Activated naive CD8-positive, alpha-beta T cell treated with anti-CD3 and anti-CD28 coated beads, Interleukin-2, amount 10 ng/mL, durations not matched to agents 7 days and 5 days (primary cell): ENCODE measurements at regions of chr17 and their contacts with region 1.

Region 1: DNA sequence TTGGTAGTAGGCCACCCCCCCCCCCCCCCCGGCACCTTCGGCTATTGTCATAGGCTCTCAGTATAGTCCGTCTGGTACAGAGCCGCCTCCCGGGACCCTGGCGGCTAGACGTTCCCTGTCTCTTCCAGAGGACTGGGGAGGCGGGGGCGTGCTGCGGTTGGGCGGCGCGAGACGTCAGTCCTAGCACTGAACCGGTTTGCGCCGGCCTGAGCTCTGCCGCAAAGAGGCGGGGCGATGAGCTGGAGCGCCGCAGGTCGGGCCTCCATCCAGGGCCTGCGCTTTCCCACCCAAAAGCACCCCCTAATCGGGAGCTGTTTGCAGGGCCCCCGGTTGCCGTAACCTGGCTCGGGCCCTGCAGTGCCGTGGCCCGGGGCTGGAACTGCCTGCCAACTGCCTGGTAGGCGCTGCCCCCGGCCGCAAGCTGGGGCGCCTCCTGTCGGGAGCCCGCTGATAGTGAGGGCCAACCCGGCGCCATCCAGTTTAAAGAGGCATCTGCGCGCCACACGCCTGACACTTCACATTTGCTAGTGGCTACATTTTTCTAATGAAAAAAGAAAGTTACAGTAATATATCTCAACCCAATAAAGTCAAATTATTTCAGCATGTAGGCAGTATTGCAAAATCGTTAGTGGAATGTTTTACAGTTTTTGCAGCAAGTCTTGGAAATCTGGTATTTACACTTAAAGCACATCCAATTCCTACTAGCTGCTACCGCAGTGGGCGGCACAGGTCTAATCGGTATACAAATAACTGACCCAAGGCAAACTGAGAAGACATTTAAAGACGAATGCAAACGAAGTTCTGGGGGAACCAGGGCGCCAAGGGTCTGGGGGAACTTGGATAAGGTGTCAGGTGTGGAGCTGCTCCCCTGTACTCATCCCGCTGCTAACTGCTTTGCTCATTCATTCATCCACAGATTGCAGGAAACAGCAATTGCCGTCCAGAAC is 748 bp upstream of the USP22 start:
- DNase-seq: peak; percentile 96
- ATAC-seq: peak; percentile 86
- H3K4me3 Mint-ChIP-seq: peak overlapping the region; percentile 84
- H3K27ac Mint-ChIP-seq: peak overlapping the region; percentile 90
- H3K4me1 Mint-ChIP-seq: peaks cover 22% of the 10 kb centered on the region
- H3K27me3 Mint-ChIP-seq: peaks cover under 1% of the 10 kb centered on the region

Region 2: GRCh38 chr17:20944014-20944865 is 99.3 kb before region 1 on chr17:
- POLR2A ChIA-PET with region 1: no interaction called
- DNase-seq: peak; percentile 39
- ATAC-seq: peak; percentile 88
- H3K4me3 Mint-ChIP-seq: no peak overlapping the region
- H3K27ac Mint-ChIP-seq: no peak overlapping the region
- H3K4me1 Mint-ChIP-seq: peaks cover 3% of the 10 kb centered on the region
- H3K27me3 Mint-ChIP-seq: peaks cover 7% of the 10 kb centered on the region

Region 3: GRCh38 chr17:21058098-21058893 is 14.7 kb after region 1 on chr17:
- POLR2A ChIA-PET with region 1: interaction called, 13 read pairs
- DNase-seq: no peak
- ATAC-seq: no peak
- H3K4me3 Mint-ChIP-seq: no peak overlapping the region
- H3K27ac Mint-ChIP-seq: no peak overlapping the region
- H3K4me1 Mint-ChIP-seq: no peaks in the 10 kb centered on the region
- H3K27me3 Mint-ChIP-seq: peaks cover 6% of the 10 kb centered on the region

Region 4: DNA sequence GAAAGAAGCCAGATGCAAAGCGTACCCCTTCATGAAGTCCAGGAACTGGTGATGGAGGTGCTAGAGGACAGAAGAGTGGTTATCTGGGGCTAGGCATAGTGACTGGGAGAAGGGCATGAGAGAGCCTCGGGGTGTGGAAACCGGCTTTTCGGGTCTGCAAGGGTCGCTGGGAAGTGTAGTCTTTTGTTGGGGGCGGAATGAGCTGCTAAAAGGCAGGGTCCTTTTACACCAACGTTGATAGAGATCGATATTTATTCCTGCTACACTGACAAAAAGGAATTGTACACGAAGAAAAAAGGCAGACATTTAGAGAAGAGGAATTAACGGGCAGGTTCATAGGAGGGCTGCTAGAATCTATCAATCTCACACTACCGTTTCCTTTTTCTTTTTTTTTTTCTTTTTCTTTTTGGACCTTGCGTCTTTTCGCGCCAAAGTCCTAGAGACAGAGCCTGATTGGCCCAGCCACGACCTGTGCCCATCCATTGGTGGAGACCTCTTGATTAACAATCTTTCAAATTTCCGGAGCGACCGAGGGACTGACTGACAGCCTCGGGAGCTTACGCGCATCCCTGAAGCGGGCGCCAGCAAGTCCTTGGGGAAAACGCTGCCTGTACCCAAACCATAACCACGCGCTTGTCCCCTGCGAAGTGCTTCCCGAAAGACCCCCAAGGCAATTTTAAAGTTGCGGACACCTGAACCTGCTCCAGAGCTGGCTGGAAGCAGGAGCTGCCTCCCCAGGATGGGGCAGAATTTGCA is 55.6 kb after region 1 on chr17:
- POLR2A ChIA-PET with region 1: interaction called, 46 read pairs
- DNase-seq: peak; percentile 75
- ATAC-seq: peak; percentile 99
- H3K4me3 Mint-ChIP-seq: peak overlapping the region; percentile 89
- H3K27ac Mint-ChIP-seq: peak overlapping the region; percentile 94
- H3K4me1 Mint-ChIP-seq: peaks cover 14% of the 10 kb centered on the region
- H3K27me3 Mint-ChIP-seq: no peaks in the 10 kb centered on the region

Region 5: GRCh38 chr17:21275579-21276263 is 232.2 kb after region 1 on chr17:
- POLR2A ChIA-PET with region 1: interaction called, 13 read pairs
- DNase-seq: peak; percentile 98
- ATAC-seq: peak; percentile 80
- H3K4me3 Mint-ChIP-seq: peak overlapping the region; percentile 85
- H3K27ac Mint-ChIP-seq: peak overlapping the region; percentile 82
- H3K4me1 Mint-ChIP-seq: peaks cover 37% of the 10 kb centered on the region
- H3K27me3 Mint-ChIP-seq: no peaks in the 10 kb centered on the region